ENCODE measurements at regions of chr10 and their contacts with region 1.

Region 1: DNA sequence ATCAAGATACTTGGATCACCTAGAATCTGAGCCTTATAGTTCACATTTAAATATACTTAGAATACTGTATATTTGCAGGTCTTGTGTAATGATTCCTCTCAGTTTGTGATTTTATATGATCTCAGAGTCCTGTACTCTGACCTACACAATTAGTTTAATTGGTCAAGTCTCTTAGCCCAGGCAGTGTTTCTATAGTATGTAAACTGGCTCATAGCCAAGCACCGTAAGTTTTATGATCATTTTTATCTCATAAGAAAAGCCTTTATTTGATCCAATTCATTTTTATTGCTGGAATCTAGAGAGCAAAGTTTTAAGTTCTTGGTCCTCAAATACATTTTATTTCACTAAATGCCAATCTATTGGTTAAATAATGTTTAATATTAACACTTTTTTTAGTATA is 242.2 kb downstream of the MALRD1 start:
- DNase-seq: no peak
- ATAC-seq: no peak
- H3K4me3 ChIP-seq: no peak overlapping the region
- H3K27ac ChIP-seq: no peak overlapping the region
- H3K4me1 ChIP-seq: no peaks in the 10 kb centered on the region
- H3K27me3 ChIP-seq: no peaks in the 10 kb centered on the region
- CTCF ChIP-seq: no peak
- POLR2A ChIP-seq: no peak
- RAD21 ChIP-seq: no peak

Region 2: DNA sequence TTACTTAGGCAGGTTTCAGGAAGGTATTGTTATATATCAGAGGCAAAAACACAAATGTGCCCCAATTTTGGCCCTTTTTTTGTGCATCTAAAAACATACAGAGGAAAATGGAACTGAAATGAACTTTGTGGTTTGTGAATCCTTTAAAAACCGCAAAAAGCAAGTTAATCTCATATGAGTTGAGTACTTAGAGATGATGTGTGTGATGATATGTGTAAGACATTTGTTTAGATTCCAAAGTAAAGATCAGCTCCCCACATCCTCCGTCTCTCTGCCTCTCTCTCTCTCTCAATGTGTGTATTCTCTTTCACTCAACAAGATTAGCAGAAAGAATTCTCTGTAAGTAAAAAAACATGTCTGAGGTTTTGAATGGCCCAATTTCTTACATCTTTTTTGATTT is 40.2 kb before region 1 on chr10:
- CTCF ChIA-PET with region 1: no interaction called
- POLR2A ChIA-PET with region 1: no interaction called
- RAD21 ChIA-PET with region 1: no interaction called
- intact Hi-C with region 1: loop called (anchors 5 kb)
- DNase-seq: no peak
- ATAC-seq: no peak
- H3K4me3 ChIP-seq: no peak overlapping the region
- H3K27ac ChIP-seq: no peak overlapping the region
- H3K4me1 ChIP-seq: no peaks in the 10 kb centered on the region
- H3K27me3 ChIP-seq: no peaks in the 10 kb centered on the region
- CTCF ChIP-seq: no peak
- POLR2A ChIP-seq: no peak
- RAD21 ChIP-seq: no peak